ENCODE measurements at regions of chr4 and their contacts with region 1.

Region 1: DNA sequence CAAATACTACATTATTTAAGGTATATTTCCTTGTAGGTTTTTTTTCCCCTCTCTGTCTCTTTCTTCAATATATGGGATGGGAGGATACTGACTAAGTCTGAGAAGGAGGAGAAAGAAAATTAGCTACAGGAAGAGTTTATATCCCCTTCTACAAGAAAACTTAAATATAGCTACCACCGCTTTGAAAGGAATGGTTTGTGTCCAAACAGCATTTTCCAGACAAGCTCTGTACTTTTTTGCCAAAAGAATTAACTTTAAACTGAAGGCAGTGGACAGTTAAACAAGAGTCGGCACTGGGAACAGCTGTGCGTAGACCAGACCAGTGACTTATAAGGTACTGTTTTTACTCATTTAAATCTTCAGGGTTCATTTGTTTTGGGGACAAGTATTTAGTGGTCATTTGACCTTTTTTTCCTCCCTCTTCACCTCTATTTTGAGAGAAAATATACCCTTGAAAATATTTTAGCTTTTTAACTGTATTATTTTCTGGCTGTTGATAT is 303.7 kb downstream of the ARHGAP24 start:
- DNase-seq: peak; percentile 83
- H3K4me3 ChIP-seq: peak overlapping the region; percentile 58 to 98 (median 98)
- H3K27ac ChIP-seq: peak overlapping the region; percentile 100
- H3K4me1 ChIP-seq: peaks cover 73% of the 10 kb centered on the region
- H3K27me3 ChIP-seq: no peaks in the 10 kb centered on the region
- CTCF ChIP-seq: no peak
- POLR2A ChIP-seq: no peak

Region 2: DNA sequence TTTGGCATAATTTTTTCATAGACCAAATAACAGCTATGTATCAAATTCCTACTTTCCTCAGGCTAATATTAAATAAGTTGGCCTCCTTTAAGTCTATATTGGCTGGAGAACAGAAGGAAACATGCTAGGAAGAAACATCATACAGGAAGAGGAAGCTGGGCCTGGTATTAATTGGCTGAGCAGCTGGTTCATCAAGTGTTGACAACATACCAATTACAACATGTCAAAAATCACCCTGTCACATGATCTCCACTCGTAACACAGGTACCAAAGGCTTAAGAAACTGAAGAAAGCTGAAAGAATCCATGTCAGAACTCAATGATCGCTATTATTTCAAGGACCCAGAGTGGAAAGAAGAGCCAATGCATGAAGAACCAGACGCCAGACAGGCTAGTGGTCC is 822.7 kb before region 1 on chr4:
- CTCF ChIA-PET with region 1: no interaction called
- POLR2A ChIA-PET with region 1: no interaction called
- dilution Hi-C with region 1: no loop called
- intact Hi-C with region 1: no loop called
- DNase-seq: no peak
- H3K4me3 ChIP-seq: no peak overlapping the region
- H3K27ac ChIP-seq: no peak overlapping the region
- H3K4me1 ChIP-seq: peaks cover 16% of the 10 kb centered on the region
- H3K27me3 ChIP-seq: no peaks in the 10 kb centered on the region
- CTCF ChIP-seq: no peak
- POLR2A ChIP-seq: no peak

Region 3: GRCh38 chr4:85543832-85544231 is 234.8 kb before region 1 on chr4:
- CTCF ChIA-PET with region 1: no interaction called
- POLR2A ChIA-PET with region 1: no interaction called
- dilution Hi-C with region 1: no loop called
- intact Hi-C with region 1: no loop called
- DNase-seq: no peak
- H3K4me3 ChIP-seq: no peak overlapping the region
- H3K27ac ChIP-seq: no peak overlapping the region
- H3K4me1 ChIP-seq: no peaks in the 10 kb centered on the region
- H3K27me3 ChIP-seq: no peaks in the 10 kb centered on the region
- CTCF ChIP-seq: no peak
- POLR2A ChIP-seq: no peak

Region 4: GRCh38 chr4:85756938-85757337 is 21.7 kb before region 1 on chr4:
- CTCF ChIA-PET with region 1: interaction called, 73 read pairs
- POLR2A ChIA-PET with region 1: interaction called, 43 read pairs
- dilution Hi-C with region 1: no loop called
- intact Hi-C with region 1: loop called (anchors 1 kb)
- DNase-seq: peak; percentile 68
- H3K4me3 ChIP-seq: no peak overlapping the region
- H3K27ac ChIP-seq: no peak overlapping the region
- H3K4me1 ChIP-seq: peaks cover 22% of the 10 kb centered on the region
- H3K27me3 ChIP-seq: no peaks in the 10 kb centered on the region
- CTCF ChIP-seq: peak; percentile 38 to 57
- POLR2A ChIP-seq: no peak

Region 5: GRCh38 chr4:85792376-85793232 is 13.9 kb after region 1 on chr4:
- CTCF ChIA-PET with region 1: interaction called, 129 read pairs
- POLR2A ChIA-PET with region 1: interaction called, 8 read pairs
- dilution Hi-C with region 1: no loop called
- intact Hi-C with region 1: loop called (anchors 1 kb)
- DNase-seq: peak; percentile 88
- H3K4me3 ChIP-seq: peak overlapping the region in 1 of 3 experiments; percentile 5
- H3K27ac ChIP-seq: peak overlapping the region; percentile 62
- H3K4me1 ChIP-seq: peaks cover 81% of the 10 kb centered on the region
- H3K27me3 ChIP-seq: no peaks in the 10 kb centered on the region
- CTCF ChIP-seq: no peak
- POLR2A ChIP-seq: no peak

Region 6: DNA sequence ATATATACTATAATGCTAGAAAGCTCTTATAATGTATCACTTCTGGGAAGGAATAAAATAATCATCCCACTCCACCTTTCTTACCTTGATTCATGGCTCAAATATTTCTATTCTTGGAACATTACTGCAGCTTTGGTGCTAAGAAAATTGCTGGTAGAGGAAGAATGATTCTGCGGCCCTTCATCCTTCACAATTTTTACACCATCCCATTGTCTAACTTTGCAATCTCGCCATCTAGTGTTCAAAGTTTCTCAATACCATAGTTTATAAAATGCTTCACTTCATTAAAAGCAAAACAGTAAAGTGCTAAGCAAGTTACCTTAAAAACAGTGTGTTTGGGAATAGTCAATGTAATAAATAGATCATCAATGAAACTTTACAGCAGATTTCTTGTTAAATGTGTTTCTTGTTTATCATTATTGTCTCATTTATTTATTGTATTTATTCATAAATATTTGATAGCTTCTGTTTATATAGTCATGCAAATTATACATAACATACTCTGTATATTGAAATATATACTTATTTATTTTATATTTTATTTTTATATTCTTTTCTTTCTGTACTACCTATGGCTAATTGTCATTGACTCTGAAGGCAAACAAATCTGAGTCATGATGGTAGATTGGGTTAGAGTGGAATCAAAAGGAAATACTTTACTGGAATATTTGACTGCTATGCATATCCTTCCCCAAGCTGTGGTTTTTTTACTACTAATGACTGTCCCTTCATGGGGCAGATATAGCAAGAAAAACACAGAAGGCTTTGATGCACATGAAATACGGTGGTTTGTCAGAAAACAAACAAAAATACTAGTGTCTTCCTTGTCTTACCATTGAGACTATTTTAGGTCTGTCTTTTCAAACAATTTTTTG is 190.5 kb after region 1 on chr4:
- CTCF ChIA-PET with region 1: interaction called, 19 read pairs
- POLR2A ChIA-PET with region 1: no interaction called
- dilution Hi-C with region 1: no loop called
- intact Hi-C with region 1: no loop called
- DNase-seq: peak; percentile 82
- H3K4me3 ChIP-seq: no peak overlapping the region
- H3K27ac ChIP-seq: peak overlapping the region; percentile 43
- H3K4me1 ChIP-seq: peaks cover 52% of the 10 kb centered on the region
- H3K27me3 ChIP-seq: no peaks in the 10 kb centered on the region
- CTCF ChIP-seq: peak; percentile 16 to 38
- POLR2A ChIP-seq: no peak

Region 7: DNA sequence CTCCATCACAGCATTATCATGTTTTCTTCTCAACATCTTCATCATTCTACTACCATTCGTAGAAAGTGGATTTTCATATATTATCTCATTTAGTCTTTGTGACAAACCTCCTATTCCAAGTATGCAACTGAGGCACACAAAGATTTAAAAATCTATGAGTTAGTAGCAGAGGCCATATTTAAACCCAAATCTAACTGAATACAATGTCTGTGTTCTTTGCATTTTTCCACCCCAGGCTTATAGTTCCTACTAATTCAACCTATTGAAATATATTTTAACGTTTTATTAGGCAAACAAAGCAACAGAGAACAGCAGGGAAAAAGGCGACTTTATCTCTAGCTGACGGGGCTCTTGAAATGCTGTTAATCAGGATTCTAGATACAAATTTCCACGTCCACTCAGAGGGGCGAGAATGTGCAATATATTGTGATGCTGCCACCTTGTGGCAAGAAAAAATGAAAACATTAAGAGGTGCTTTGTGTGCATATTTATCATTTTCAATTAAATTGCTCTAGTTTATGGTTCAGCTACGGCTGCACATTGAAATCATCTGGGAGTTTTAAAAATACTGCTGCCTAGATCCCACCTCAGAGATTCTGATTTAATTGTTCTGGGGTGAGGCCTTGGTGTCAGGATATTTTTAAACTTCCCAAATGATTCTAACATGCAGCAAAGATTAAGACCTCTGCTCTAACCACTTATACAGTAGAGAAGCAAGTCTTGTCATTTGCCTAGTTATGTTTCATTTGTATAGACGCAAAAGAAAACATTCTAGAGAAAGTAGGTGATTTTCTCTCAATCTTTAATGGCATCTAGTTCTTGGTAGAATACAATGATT is 265.3 kb after region 1 on chr4:
- CTCF ChIA-PET with region 1: interaction called, 10 read pairs
- POLR2A ChIA-PET with region 1: no interaction called
- dilution Hi-C with region 1: no loop called
- intact Hi-C with region 1: no loop called
- DNase-seq: peak; percentile 77
- H3K4me3 ChIP-seq: no peak overlapping the region
- H3K27ac ChIP-seq: no peak overlapping the region
- H3K4me1 ChIP-seq: no peaks in the 10 kb centered on the region
- H3K27me3 ChIP-seq: peaks cover 6 to 17% of the 10 kb centered on the region in 2 experiments
- CTCF ChIP-seq: peak; percentile 32 to 41
- POLR2A ChIP-seq: no peak

Measured in endothelial cell of umbilical vein (primary cell).